Mammary epithelial cell (primary cell): ENCODE measurements at regions of chr15 and their contacts with region 1.

Region 1: GRCh38 chr15:93703092-93703739 is 528.1 kb upstream of the MCTP2 start:
- DNase-seq: peak; percentile 46
- H3K4me3 ChIP-seq: no peak overlapping the region
- H3K27ac ChIP-seq: no peak overlapping the region
- H3K4me1 ChIP-seq: peaks cover 10% of the 10 kb centered on the region
- H3K27me3 ChIP-seq: no peaks in the 10 kb centered on the region
- CTCF ChIP-seq: no peak

Region 2: GRCh38 chr15:93644595-93644994 is 58.6 kb before region 1 on chr15:
- CTCF ChIA-PET with region 1: no interaction called
- dilution Hi-C with region 1: no loop called
- in situ Hi-C with region 1: no loop called
- intact Hi-C with region 1: no loop called
- DNase-seq: no peak
- H3K4me3 ChIP-seq: no peak overlapping the region
- H3K27ac ChIP-seq: no peak overlapping the region
- H3K4me1 ChIP-seq: no peaks in the 10 kb centered on the region
- H3K27me3 ChIP-seq: no peaks in the 10 kb centered on the region
- CTCF ChIP-seq: no peak

Region 3: GRCh38 chr15:93771196-93772030 is 68.2 kb after region 1 on chr15:
- CTCF ChIA-PET with region 1: no interaction called
- dilution Hi-C with region 1: no loop called
- in situ Hi-C with region 1: no loop called
- intact Hi-C with region 1: loop called (anchors 5 kb)
- DNase-seq: peak; percentile 84
- H3K4me3 ChIP-seq: no peak overlapping the region
- H3K27ac ChIP-seq: no peak overlapping the region
- H3K4me1 ChIP-seq: peaks cover 24% of the 10 kb centered on the region
- H3K27me3 ChIP-seq: no peaks in the 10 kb centered on the region
- CTCF ChIP-seq: no peak

Region 4: DNA sequence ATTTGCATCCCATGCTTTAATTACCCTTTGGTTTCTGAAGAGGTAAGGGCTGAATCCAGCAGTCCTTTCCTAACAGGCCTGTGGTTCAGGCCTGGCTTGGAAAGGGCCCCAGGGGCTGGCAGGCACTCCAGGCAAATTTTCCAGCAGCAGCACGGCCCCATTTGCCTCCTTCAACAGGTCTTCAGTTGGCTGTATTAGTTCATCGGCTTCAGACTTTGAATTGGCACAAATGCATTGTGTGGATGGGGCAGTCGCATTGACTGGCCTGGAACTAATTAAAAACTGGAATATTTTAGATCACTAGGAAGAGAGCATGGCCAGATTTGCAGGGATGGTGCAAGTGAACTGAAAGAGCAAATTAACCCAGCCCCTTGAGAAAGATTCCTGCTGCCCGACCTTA is 320.3 kb after region 1 on chr15:
- CTCF ChIA-PET with region 1: no interaction called
- dilution Hi-C with region 1: no loop called
- in situ Hi-C with region 1: no loop called
- intact Hi-C with region 1: no loop called
- DNase-seq: no peak
- H3K4me3 ChIP-seq: no peak overlapping the region
- H3K27ac ChIP-seq: no peak overlapping the region
- H3K4me1 ChIP-seq: no peaks in the 10 kb centered on the region
- H3K27me3 ChIP-seq: no peaks in the 10 kb centered on the region
- CTCF ChIP-seq: no peak

Region 5: DNA sequence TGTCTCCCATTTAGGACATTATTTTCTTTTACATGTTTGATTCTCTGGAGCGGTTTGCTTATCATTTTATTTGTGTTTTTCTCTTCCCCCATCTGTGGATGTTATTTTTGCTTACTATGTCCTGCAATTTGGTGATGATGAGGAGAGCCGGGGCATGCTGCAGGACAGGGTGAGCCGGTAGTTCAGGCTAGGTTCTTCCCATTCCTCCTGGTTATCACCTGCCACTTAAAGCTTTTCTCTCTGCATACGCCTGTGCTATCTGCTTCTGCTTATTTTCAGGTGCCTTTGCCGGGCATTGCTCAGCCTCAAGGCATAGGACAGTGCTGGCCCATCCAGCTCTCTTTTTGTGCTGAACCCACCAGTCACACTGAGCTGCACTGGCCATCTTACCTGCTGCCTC is 614.0 kb after region 1 on chr15:
- CTCF ChIA-PET with region 1: no interaction called
- dilution Hi-C with region 1: no loop called
- in situ Hi-C with region 1: no loop called
- intact Hi-C with region 1: no loop called
- DNase-seq: no peak
- H3K4me3 ChIP-seq: no peak overlapping the region
- H3K27ac ChIP-seq: no peak overlapping the region
- H3K4me1 ChIP-seq: no peaks in the 10 kb centered on the region
- H3K27me3 ChIP-seq: no peaks in the 10 kb centered on the region
- CTCF ChIP-seq: no peak